Colonic mucosa (tissue), 4 donors: ENCODE measurements at regions of chr3 and their contacts with region 1.

Region 1: DNA sequence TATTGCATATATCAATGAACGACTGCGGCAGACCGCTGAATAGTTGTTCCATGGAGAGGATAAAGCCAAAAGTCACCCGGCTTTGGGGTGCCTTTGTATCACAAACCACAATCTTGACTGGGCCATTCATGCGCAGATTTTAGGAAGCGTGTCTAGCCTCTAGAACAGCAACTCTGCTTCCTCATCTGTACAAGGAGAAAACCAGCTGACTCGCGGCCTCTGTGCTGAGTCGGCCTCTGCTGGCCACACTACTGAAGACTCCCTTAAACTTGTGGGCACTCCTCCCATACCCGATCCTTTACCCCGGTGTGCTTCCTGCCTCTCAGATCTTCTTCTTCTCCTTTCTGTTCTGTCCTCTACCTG is 872 bp downstream of the DLEC1 start:
- DNase-seq: peak; percentile 73
- H3K4me3 ChIP-seq: peak overlapping the region; percentile 36
- H3K27ac ChIP-seq: peak overlapping the region; percentile 57
- H3K4me1 ChIP-seq: peaks cover 8% of the 10 kb centered on the region
- H3K27me3 ChIP-seq: no peaks in the 10 kb centered on the region
- CTCF ChIP-seq: no peak

Region 2: DNA sequence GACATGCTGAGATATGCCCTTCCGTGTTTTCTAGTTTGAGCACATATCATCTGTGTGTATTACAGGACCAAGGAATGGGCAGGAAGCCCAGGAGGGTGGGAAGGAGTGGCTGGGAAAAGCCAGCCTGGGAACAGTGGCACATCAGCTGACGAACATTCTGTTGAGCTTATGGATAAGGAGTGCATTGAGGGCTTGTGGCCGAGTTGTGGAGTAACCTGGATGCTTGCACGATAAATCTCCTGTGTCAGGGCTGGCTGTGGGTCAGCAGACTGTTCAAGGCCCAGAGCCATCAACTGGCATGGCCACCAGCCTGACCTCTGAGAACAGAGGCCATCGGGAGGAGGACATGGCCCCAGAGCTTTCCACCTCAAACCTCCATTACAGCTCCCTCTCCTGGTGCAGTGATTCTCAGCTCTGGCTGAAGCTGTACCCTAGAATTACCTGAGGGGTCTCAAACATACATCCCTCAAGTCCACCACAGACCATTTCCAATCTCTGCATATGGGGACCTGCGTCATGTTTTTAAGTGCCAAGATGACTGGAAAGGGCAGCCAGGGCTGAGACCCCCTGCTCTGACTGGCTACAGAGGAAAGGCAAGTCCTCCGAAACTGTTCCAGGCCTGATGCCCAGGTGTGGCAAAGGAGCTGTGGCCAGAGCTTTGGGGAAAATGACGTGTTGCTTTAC is 54.1 kb before region 1 on chr3:
- intact Hi-C with region 1: no loop called
- DNase-seq: peak; percentile 84
- H3K4me3 ChIP-seq: no peak overlapping the region
- H3K27ac ChIP-seq: peak overlapping the region; percentile 91
- H3K4me1 ChIP-seq: peaks cover 22% of the 10 kb centered on the region
- H3K27me3 ChIP-seq: no peaks in the 10 kb centered on the region
- CTCF ChIP-seq: no peak

Region 3: GRCh38 chr3:38004415-38005076 is 35.3 kb before region 1 on chr3:
- intact Hi-C with region 1: loop called (anchors 2 kb)
- DNase-seq: peak; percentile 96
- H3K4me3 ChIP-seq: no peak overlapping the region
- H3K27ac ChIP-seq: peak overlapping the region; percentile 85
- H3K4me1 ChIP-seq: peaks cover 20% of the 10 kb centered on the region
- H3K27me3 ChIP-seq: no peaks in the 10 kb centered on the region
- CTCF ChIP-seq: peak; percentile 77